Gastrocnemius medialis (tissue), 4 donors: ENCODE measurements at regions of chr12 and their contacts with region 1.

Region 1: GRCh38 chr12:128290938-128291337 is 24.0 kb downstream of the TMEM132C start:
- DNase-seq: no peak
- ATAC-seq: no peak
- H3K4me3 ChIP-seq: no peak overlapping the region
- H3K27ac ChIP-seq: no peak overlapping the region
- H3K4me1 ChIP-seq: no peaks in the 10 kb centered on the region
- H3K27me3 ChIP-seq: no peaks in the 10 kb centered on the region
- CTCF ChIP-seq: no peak
- POLR2A ChIP-seq: no peak

Region 2: DNA sequence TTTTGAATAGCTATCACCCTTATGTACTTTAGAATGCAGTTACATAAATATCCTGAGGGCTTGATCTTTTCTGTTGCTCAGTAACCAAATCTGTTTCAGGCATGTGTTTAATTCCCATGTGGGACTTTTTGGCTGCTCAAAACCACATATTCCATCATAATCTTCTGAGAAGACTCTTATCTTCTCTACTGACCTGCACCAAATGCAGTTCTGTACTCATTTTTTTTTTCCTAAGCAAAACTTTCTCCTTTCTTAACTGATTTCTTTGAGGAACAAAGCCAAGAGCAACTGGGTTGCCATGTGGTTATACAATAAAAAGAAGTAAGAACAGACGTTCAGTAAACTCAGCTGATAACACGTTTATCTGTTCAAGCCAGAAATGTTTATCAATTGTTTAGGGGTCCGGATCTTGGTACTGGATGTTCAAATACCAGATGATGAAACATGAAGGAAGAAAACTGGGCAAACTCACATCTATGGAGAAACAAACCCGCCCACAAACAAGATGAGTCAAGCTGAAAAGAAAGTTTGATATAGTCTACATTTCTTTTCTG is 26.1 kb after region 1 on chr12:
- in situ Hi-C with region 1: no loop called
- intact Hi-C with region 1: loop called (anchors 1 kb)
- DNase-seq: no peak
- ATAC-seq: peak; percentile 56 to 58
- H3K4me3 ChIP-seq: no peak overlapping the region
- H3K27ac ChIP-seq: no peak overlapping the region
- H3K4me1 ChIP-seq: no peaks in the 10 kb centered on the region
- H3K27me3 ChIP-seq: no peaks in the 10 kb centered on the region
- CTCF ChIP-seq: no peak
- POLR2A ChIP-seq: no peak